ENCODE measurements at regions of chr17 and their contacts with region 1.

Region 1: DNA sequence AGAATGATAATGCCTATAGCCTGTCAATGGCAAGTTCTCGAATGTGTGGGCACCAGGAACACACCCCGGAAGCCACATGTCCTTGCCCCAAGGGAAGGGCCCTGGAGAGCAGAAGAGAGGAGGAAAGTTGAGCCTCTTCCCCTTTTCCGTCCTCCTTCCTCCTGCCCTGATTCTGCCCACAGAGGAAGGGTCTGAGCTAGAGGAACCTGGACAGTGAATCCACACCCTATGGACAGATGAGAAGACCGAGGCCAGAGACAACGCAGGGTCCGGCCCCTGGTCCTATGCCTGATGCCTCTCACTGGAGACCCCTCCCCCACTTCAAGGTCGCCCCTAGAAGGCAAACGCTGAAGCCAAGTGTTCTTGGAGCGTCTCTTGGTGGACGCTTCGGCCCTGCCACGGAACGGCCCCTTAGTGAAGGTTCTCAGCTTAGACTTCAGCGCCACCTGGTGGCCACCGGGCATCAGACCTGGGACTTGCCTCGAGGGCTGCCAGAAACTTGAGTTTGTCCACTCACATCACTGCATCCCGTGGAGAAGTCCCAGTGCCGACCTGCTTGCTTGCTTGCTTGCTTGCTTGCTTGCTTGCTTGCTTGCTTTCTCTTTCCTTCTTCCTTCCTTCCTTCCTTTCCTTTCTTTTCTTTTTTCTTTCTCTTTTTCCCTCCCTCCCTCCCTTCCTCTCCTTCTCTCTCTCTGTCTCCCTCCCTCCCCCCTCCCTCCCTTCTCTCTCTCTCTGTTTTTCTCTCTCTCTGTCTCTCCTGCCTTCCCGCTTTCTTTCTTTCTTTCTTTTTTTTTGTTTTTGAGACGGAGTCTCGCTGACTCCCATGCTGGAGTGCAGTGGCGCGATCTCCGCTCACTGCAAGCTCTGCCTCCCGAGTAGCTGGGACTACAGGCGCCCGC is 20.6 kb upstream of the SPNS3 start:
- DNase-seq: peak; percentile 63
- ATAC-seq: peak; percentile 98
- H3K4me3 ChIP-seq: peak overlapping the region in 1 of 3 experiments; percentile 64; a peak in 2 of 6 replicates
- H3K27ac ChIP-seq: no peak overlapping the region
- H3K4me1 ChIP-seq: peaks cover 8% of the 10 kb centered on the region
- H3K27me3 ChIP-seq: peaks cover 0 to 4% of the 10 kb centered on the region in 2 experiments; a peak in 1 of 5 replicates
- CTCF ChIP-seq: peak; percentile 97
- EP300 ChIP-seq: no peak
- POLR2A ChIP-seq: no peak
- RAD21 ChIP-seq: peak; percentile 94

Region 2: GRCh38 chr17:4199818-4200402 is 213.3 kb before region 1 on chr17:
- CTCF ChIA-PET with region 1: interaction called, 21 read pairs
- POLR2A ChIA-PET with region 1: no interaction called
- in situ Hi-C with region 1: loop called (anchors 10 kb)
- intact Hi-C with region 1: no loop called
- DNase-seq: peak; percentile 36
- ATAC-seq: no peak
- H3K4me3 ChIP-seq: no peak overlapping the region
- H3K27ac ChIP-seq: no peak overlapping the region
- H3K4me1 ChIP-seq: no peaks in the 10 kb centered on the region
- H3K27me3 ChIP-seq: no peaks in the 10 kb centered on the region
- CTCF ChIP-seq: peak; percentile 69
- EP300 ChIP-seq: no peak
- POLR2A ChIP-seq: no peak
- RAD21 ChIP-seq: no peak

Region 3: GRCh38 chr17:4215882-4216570 is 197.2 kb before region 1 on chr17:
- CTCF ChIA-PET with region 1: interaction called, 19 read pairs
- POLR2A ChIA-PET with region 1: no interaction called
- in situ Hi-C with region 1: no loop called
- intact Hi-C with region 1: loop called (anchors 1 kb)
- DNase-seq: no peak
- ATAC-seq: no peak
- H3K4me3 ChIP-seq: no peak overlapping the region
- H3K27ac ChIP-seq: no peak overlapping the region
- H3K4me1 ChIP-seq: peaks cover 18% of the 10 kb centered on the region
- H3K27me3 ChIP-seq: no peaks in the 10 kb centered on the region
- CTCF ChIP-seq: no peak
- EP300 ChIP-seq: no peak
- POLR2A ChIP-seq: no peak
- RAD21 ChIP-seq: no peak